Activated CD8-positive, alpha-beta T cell treated with anti-CD3 and anti-CD28 coated beads for 36 hours (primary cell): ENCODE measurements at regions of chr6 and their contacts with region 1.

Region 1: GRCh38 chr6:90478789-90479602 is 107.9 kb downstream of the MAP3K7 start:
- DNase-seq: peak; percentile 90
- ATAC-seq: peak; percentile 90
- H3K4me3 Mint-ChIP-seq: no peak overlapping the region
- H3K27ac Mint-ChIP-seq: peak overlapping the region; percentile 66
- H3K4me1 Mint-ChIP-seq: peaks cover 52% of the 10 kb centered on the region
- H3K27me3 Mint-ChIP-seq: no peaks in the 10 kb centered on the region
- CTCF ChIP-seq: peak; percentile 97

Region 2: DNA sequence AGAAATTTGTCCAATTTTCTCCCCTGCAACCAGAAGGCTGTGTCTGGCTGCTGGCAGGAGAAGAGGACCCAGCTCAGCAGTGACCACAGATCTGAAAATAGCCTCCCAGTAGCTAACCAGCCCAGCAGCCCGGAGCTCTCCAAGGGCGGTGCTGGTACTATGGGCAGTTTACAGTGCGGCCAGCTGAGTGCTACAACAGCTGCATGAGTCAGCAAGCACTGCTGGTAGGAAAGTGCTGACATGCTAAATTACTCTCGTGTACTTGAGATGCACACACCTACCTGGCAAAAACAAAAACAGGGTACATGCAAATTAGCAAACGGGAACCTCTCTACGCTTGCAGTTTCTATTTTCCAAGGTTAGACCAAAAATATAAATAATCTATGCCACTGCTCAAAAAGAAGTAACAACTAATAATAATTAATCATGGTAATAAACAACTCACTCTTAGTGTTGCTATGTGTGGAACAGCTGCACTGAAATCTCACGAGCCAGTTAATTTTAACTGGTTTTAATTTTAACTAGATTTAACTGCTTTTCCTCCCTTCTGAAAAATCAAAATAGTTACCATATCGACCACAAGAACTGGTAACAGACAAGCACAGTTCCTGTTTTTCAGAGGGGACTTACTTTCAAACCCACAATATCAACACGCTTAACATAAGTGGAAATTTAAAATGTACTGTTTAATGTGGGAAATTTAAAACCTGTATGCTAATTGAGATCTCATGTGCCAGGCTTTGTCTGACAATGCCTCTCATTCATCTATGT is 193.2 kb before region 1 on chr6:
- CTCF ChIA-PET with region 1: interaction called, 231 read pairs
- POLR2A ChIA-PET with region 1: interaction called, 65 read pairs
- intact Hi-C with region 1: loop called (anchors 2 kb)
- DNase-seq: peak; percentile 80
- ATAC-seq: peak; percentile 40
- H3K4me3 Mint-ChIP-seq: peak overlapping the region; percentile 64
- H3K27ac Mint-ChIP-seq: peak overlapping the region; percentile 94
- H3K4me1 Mint-ChIP-seq: peaks cover 87% of the 10 kb centered on the region
- H3K27me3 Mint-ChIP-seq: no peaks in the 10 kb centered on the region
- CTCF ChIP-seq: no peak

Region 3: DNA sequence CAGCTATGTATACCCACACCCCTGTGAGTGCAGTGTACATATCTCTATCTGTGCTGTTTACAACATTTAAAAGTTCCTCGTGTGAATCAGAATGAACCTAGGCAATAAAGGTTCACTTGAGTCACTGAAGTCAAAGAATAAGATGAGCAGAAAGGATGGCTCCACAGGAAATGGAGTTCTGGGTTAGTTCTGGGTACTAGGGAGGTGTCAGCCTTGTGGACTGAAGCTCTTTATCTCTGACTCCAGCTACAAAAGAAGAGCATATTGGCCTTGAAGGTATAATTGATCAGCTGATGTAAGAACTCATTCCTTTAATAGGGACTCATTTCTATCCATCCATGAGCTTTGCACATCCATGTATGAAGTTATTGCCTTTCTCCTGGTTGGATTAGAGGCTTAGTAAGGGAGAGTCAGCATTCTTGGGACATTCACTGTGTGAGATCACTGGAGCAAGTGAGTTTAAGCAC is 108.5 kb before region 1 on chr6:
- CTCF ChIA-PET with region 1: interaction called, 10 read pairs
- POLR2A ChIA-PET with region 1: no interaction called
- intact Hi-C with region 1: no loop called
- DNase-seq: peak; percentile 22
- ATAC-seq: peak; percentile 74
- H3K4me3 Mint-ChIP-seq: no peak overlapping the region
- H3K27ac Mint-ChIP-seq: peak overlapping the region; percentile 42
- H3K4me1 Mint-ChIP-seq: peaks cover 21% of the 10 kb centered on the region
- H3K27me3 Mint-ChIP-seq: no peaks in the 10 kb centered on the region
- CTCF ChIP-seq: no peak

Region 4: DNA sequence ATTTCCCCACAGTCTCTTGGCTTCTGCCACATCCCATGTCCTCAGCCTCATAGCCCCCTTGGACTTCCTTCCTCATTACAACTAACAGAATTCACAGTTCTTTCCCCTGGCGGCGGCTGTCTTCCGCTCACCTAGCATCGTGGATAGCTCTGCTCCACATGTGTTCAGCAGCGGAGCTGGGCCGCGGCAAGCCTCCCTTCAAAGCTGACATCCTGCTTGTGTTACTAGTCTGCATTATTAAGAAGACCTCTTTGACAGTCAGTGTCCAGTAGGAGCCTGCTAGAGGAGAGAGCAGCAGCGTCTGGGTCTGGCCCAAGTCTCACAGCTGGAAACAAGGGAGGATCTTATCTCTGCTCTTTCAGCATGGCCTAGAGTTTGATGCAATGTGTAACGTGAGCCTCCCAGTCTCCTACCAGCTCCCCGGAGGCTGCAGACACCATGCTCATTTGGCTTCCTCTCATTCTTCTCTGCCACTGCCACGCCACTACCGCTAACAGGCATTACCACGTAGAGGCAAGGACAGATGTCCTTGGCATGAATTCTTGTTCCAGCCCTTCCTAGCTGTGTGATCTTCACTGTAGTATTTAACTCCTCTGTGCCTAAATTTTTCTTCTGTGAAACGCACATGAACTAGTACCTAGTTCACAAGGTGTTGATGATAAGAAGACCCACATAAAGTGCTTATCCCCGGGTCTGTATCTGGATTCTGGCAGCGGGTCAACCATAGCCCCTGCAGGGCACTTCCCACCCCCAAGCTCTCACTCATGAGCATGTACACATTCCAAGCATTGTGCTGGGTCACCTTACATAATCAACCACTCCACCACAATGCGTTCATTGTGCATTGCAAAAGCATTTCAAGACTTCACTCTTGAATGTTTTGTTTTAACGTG is 75.3 kb before region 1 on chr6:
- CTCF ChIA-PET with region 1: interaction called, 113 read pairs
- POLR2A ChIA-PET with region 1: interaction called, 12 read pairs
- intact Hi-C with region 1: no loop called
- DNase-seq: no peak
- ATAC-seq: no peak
- H3K4me3 Mint-ChIP-seq: no peak overlapping the region
- H3K27ac Mint-ChIP-seq: peak overlapping the region; percentile 79
- H3K4me1 Mint-ChIP-seq: peaks cover 65% of the 10 kb centered on the region
- H3K27me3 Mint-ChIP-seq: no peaks in the 10 kb centered on the region
- CTCF ChIP-seq: no peak

Region 5: DNA sequence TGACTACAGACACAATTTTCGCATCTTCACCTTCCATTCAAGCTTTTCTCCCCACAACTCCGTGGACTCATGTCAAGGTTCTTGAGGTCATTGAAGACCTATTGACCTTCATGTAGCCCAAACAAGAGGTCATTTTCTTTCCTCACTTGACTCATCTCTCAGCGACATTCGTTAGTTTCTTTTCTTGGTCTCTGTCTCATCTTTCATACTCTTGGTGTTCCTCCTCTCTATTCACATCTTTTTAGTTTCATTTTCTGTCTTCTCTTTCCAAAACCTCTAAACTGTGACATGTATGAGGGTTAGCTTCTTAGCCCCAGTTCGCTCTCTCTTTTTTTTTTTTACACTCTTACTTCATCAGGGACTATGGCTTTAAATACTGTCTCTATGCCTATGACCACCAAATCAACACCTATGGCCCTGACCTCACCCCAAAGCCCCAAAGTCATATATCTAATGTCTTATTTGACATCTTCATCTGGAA is 53.8 kb before region 1 on chr6:
- CTCF ChIA-PET with region 1: interaction called, 13 read pairs
- POLR2A ChIA-PET with region 1: interaction called, 9 read pairs
- intact Hi-C with region 1: no loop called
- DNase-seq: peak; percentile 64
- ATAC-seq: peak; percentile 96
- H3K4me3 Mint-ChIP-seq: peak overlapping the region; percentile 52
- H3K27ac Mint-ChIP-seq: peak overlapping the region; percentile 91
- H3K4me1 Mint-ChIP-seq: peaks cover 25% of the 10 kb centered on the region
- H3K27me3 Mint-ChIP-seq: no peaks in the 10 kb centered on the region
- CTCF ChIP-seq: no peak

Region 6: GRCh38 chr6:90493332-90493731 is 14.3 kb after region 1 on chr6:
- CTCF ChIA-PET with region 1: interaction called, 10 read pairs
- POLR2A ChIA-PET with region 1: interaction called, 3 read pairs
- intact Hi-C with region 1: no loop called
- DNase-seq: no peak
- ATAC-seq: peak; percentile 47
- H3K4me3 Mint-ChIP-seq: no peak overlapping the region
- H3K27ac Mint-ChIP-seq: no peak overlapping the region
- H3K4me1 Mint-ChIP-seq: peaks cover 4% of the 10 kb centered on the region
- H3K27me3 Mint-ChIP-seq: peaks cover 14% of the 10 kb centered on the region
- CTCF ChIP-seq: no peak